Lower leg skin (tissue), 4 donors: ENCODE measurements at regions of chr1 and their contacts with region 1.

Region 1: DNA sequence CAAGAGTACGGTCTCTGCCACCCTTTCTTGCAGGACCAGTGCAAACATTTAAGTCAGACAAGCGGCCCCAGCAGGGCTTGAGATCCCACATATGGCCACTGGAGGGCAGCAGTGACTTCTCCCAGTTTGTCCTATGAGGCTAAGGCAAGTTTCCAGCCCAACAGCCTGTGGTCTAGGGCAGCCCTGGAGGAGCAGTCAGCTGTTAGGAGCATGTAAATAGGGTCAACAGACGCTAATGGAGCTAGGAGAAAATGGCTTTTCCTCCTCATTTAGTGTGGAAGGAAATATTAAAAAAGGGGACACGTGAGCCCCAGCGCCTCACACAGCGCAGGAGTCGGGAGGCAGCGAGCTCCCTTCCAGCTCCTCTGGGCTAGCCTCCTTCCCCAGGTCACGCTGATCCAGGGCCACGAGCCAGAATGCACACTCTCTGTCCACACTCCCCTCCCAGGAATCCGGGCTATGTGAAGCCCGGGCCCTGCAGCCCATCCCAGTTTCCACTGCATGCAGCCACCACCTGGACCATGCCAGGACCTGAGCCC is 95.6 kb downstream of the LAMC2 start:
- DNase-seq: peak; percentile 94 to 98
- H3K4me3 ChIP-seq: no peak overlapping the region
- CTCF ChIP-seq: peak in 1 of 3 donors; percentile 89
- POLR2A ChIP-seq: no peak

Region 2: GRCh38 chr1:183137782-183138181 is 143.8 kb before region 1 on chr1:
- intact Hi-C with region 1: no loop called
- DNase-seq: peak in 1 of 2 donors; percentile 42
- H3K4me3 ChIP-seq: no peak overlapping the region
- CTCF ChIP-seq: no peak
- POLR2A ChIP-seq: no peak

Region 3: DNA sequence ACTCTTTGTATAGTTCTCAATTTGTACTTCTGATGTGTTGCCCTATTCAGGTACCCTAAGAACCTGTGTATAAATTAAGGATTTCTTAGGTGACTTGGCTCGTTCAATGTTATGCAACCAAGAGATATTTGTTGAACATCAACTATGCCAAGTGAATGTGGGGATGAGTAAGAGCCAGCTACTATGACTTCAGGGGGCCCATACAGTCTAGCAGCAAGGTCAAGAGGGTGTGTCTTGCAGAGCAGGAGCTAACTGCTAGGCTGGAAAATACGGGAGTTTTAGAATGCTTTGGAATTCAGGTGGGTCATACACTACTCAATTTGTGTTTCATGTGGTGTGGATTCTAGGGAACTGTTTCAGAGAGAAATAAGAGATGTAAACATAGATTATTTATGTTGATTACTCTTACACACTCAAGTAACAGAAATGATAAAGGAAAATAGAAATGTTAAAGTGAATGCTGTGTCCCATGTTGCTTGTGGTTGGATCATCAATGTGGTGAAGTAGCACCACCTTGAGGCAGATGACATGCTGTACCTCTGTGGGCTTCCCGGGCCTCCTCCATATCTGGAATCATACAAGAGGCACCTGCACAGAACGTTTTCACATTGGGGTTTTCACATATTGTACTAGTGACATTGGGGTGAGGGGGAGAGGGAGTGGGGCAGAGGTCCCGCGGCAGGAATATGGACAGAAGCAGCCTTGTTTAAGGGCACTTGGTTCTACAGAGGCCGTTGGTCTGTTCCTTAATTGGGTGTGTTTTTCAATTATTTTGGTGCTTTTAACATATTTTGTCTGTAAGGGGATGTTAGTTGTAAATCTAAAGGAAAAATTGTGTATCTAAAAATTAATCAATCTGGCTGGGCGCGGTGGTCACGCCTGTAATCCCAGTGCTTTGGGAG is 341.5 kb after region 1 on chr1:
- intact Hi-C with region 1: loop called (anchors 10 kb)
- DNase-seq: no peak
- H3K4me3 ChIP-seq: no peak overlapping the region
- CTCF ChIP-seq: peak in 1 of 3 donors; percentile 28
- POLR2A ChIP-seq: no peak